HepG2 (cell line): ENCODE measurements at regions of chr3 and their contacts with region 1.

Region 1: DNA sequence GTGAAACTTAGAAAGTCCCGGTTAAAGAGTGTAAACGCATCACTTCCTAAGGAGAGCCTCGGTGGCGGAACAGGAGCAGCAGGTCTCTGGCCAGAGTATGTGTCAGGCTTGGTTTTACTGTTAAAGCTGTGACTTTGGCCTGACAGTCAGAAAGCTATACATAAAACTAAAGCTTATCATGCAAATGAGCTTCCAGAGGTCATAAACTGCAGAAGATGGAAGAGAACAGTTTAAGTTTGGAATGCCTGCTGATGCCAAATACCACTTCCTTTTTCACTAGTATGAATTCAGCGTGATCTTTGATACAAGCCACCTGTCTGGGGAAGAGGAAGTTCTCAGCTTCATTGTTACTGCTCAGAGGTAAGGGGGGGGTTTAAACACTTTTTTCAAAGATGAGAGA is 125.1 kb upstream of the CTDSPL start:
- DNase-seq: no peak
- ATAC-seq: no peak
- H3K4me3 ChIP-seq: no peak overlapping the region
- H3K27ac ChIP-seq: no peak overlapping the region
- H3K4me1 ChIP-seq: no peaks in the 10 kb centered on the region
- H3K27me3 ChIP-seq: 0 out of 5 replicates have a peak, but pooled peaks cover 0 to 2% of the 10 kb centered on the region in 2 experiments
- CTCF ChIP-seq: no peak
- EP300 ChIP-seq: no peak
- POLR2A ChIP-seq: no peak
- RAD21 ChIP-seq: no peak

Region 2: DNA sequence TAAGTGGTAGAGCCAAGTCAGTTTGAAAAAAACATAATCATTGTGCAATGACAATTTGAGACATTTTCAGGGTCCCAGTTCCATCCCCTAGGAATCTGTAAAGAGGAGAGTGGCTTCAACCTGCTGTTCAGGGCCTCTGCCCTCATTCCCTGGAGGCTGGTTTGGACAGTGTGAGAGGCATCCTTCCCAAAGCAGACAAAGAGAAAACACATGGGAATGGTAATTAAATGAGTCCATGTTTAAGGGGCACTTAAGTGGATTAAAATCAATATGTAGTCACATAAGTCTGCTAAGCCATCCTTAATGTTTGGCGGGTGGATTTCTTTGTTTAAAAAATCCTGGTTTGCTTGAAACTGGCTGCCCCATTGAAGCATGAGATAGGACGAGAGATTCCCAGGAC is 21.3 kb before region 1 on chr3:
- CTCF ChIA-PET with region 1: no interaction called
- POLR2A ChIA-PET with region 1: no interaction called
- in situ Hi-C with region 1: no loop called
- intact Hi-C with region 1: loop called (anchors 1 kb)
- DNase-seq: no peak
- ATAC-seq: no peak
- H3K4me3 ChIP-seq: no peak overlapping the region
- H3K27ac ChIP-seq: no peak overlapping the region
- H3K4me1 ChIP-seq: no peaks in the 10 kb centered on the region
- H3K27me3 ChIP-seq: peaks cover 0 to 5% of the 10 kb centered on the region in 2 experiments; a peak in 1 of 5 replicates
- CTCF ChIP-seq: no peak
- EP300 ChIP-seq: no peak
- POLR2A ChIP-seq: no peak
- RAD21 ChIP-seq: no peak